Right ventricle myocardium inferior (tissue), 1 donor: ENCODE measurements at regions of chr5 and their contacts with region 1.

Region 1: GRCh38 chr5:95646554-95647431 is at the start of gene RFESD:
- DNase-seq: peak; percentile 100
- ATAC-seq: peak; percentile 99
- total RNA-seq, gene RFESD: 3.0 TPM

Region 2: DNA sequence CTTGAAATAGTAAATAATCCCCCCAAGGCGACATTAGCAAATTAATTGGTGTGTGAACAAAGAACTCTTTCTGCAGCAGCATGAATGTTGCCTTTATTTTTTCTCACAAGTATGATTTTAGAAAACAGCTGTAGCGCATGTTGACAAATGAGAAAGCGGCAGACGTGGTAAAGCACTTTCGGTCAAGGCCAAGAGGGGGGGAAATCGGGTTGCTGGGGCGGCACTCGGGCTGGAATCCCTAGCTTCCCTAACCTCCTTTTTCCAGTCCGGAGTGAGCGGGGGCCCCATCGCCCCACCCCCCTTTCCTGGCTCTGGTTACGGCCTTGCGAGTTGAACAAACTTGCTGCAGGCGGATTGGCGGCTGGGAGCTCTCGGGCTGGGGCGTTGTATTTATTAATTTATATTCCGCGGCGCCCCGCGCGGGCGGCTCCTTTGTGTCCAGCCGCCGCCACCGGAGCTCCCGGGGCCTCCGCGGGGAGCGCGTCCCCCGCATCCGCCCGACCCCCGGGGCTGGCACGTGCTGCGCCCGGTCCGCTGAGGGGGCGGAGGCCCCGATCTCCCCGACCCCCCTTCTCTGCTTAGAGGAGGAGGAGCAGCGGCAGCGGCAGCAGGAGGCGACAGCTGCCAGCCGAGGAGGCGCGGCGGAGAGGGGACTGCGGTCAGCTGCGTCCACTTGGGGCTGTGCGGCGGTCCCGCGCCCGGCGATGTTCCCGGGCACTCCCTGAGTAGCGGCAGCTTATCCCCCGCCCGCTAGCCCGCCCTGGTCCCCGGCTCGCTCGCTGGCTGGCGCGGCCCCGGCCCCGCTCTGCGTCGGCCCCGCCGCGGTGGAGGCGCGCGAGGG is 84.2 kb after region 1 on chr5 and contains the start of gene RHOBTB3:
- intact Hi-C with region 1: loop called (anchors 5 kb)
- DNase-seq: peak; percentile 93
- ATAC-seq: peak; percentile 80
- total RNA-seq, gene RHOBTB3: 76.5 TPM

Region 3: GRCh38 chr5:95781101-95781583 is 134.3 kb after region 1 on chr5:
- intact Hi-C with region 1: loop called (anchors 2 kb)
- DNase-seq: peak; percentile 88
- ATAC-seq: peak; percentile 91

Region 4: DNA sequence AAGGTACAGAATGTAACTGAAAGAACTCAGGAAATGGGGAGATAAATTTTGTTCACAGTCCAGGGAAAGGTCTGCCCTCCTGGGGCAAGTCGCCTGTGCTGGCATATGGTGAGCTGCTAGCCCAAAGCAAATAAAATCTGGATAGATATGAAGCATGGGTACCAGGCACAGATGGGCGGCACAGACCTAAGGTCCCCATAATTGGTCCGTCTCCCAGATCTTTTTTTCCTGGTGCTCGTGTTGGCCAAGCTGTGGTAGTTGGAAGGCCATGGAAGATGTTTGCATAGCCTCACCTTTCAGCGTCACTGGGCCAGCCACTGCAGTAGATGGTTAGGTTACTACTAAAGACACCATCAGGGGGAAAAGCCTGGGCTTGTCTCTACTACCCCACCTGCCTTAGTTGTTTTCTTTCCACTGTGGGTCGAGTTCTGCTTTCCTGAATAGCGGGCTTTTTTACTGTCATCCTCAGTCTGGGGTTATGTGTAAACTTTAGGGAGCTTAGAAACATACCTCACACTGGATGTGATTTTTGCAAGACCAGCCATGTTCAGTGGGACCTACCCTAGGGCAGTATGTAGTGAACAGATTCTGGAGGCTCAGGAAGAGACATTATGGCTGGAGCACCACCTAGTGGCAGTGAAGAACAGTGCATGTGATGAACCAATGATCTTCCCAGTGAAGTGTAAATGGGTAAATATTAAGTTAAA is 199.9 kb after region 1 on chr5:
- intact Hi-C with region 1: loop called (anchors 1 kb)
- DNase-seq: no peak
- ATAC-seq: peak; percentile 72

Region 5: DNA sequence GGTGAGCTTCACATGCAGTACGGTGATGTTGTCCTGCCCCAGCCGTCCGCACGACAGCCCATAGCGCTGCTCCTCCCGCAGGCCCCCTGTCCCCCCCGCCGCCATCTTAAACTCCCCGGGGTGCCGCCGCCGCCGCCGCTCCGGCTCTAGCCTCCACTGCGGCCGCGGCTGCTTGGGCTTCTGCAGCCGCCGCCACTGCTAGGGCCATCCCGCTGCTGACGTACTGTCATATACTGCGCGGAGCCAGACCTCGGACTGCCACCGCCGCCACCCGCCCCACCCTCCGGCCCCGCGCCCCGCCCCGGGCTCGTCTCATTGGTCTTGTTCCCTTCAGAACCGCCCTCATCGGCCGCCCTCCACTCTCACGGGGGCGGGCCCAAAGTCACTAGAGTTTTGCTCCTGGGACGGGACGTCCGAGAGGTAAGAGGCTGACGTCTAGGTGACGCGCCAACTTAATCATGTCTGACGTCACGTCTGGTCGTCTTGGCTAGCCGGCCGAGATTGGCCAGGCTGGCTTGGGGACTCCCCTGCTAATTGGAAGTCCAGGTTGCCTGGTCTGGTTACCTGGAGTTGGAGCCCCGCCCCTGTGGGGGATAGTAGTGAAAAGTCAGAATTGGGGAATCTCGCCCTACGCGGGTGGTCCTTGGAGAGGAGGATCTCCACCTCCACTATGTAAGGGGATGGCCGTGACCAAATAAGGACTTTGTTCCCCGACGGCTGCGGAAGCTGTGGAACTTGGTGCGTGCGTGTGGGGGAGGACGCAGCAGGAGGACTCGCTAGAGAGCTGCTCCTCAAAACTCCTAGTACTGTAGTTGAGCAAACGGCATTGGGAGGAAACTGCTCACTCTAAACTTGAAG is 315.1 kb after region 1 on chr5 and contains the start of gene ELL2:
- intact Hi-C with region 1: loop called (anchors 10 kb)
- DNase-seq: peak; percentile 99
- ATAC-seq: peak; percentile 93
- total RNA-seq, gene ELL2: 26.7 TPM

Region 6: DNA sequence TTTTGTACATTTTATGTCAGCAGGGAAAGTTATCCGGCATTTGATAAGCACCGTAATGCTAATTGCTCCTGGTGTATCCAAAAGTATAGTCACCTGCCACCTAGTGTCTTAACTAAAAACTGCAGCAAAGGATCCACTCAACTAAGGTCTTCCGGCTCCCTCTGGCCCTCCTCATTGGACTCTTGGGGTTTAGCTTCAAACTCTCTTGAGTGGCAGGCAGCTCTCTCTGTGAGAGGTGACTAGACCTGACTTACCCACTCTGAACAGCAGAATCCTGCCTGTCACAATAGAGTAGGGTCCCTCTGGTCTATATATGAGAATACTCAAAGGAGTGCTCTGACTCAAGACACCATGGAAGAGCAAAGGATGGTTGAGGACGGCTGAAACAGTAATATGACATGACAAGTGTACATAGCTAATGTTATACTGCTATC is 955.0 kb after region 1 on chr5:
- intact Hi-C with region 1: loop called (anchors 10 kb)
- DNase-seq: no peak
- ATAC-seq: peak; percentile 77